ENCODE measurements at regions of chr2 and their contacts with region 1.

Region 1: GRCh38 chr2:73913414-73914054 is 13.1 kb upstream of the DGUOK start:
- DNase-seq: no peak
- H3K27ac ChIP-seq: no peak overlapping the region
- CTCF ChIP-seq: no peak

Region 2: GRCh38 chr2:73894877-73895276 is 18.7 kb before region 1 on chr2:
- CTCF ChIA-PET with region 1: interaction called, 10 read pairs
- POLR2A ChIA-PET with region 1: no interaction called
- DNase-seq: no peak
- H3K27ac ChIP-seq: no peak overlapping the region
- CTCF ChIP-seq: no peak

Region 3: DNA sequence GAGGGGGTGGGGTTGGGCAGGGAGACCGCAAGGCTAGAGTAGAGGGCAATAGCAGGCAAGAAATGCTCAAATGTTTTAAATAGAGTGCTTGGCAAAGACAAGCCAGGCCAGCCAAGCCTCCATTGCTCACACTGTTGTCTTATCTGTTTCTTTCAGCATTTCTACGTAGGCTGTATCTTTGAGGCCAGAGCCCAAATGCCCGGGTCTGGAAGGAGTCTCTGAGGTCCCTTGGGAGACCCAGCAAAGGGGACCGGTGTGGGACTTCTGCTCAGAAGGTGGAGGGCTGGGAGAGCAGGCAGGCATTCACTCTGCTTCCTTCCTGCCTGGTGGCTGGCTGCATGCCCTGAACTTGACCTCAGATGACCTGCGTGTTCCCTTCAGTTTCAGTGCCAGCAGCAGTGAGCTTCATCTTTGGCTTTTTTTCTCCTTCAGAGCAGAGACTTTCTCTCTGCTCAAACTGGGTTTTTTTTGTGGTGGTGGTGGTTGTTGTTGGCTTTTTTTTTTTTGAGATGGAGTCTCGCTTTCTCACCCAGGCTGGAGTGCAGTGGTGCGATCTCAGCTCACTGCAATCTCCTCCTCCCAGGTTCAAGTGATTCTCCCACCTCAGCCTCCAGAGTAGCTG is 57.4 kb after region 1 on chr2:
- CTCF ChIA-PET with region 1: no interaction called
- POLR2A ChIA-PET with region 1: no interaction called
- DNase-seq: no peak
- H3K27ac ChIP-seq: peak overlapping the region; percentile 62
- CTCF ChIP-seq: no peak

Region 4: GRCh38 chr2:74334931-74335333 is 421.4 kb after region 1 on chr2:
- CTCF ChIA-PET with region 1: no interaction called
- POLR2A ChIA-PET with region 1: no interaction called
- DNase-seq: peak; percentile 72
- H3K27ac ChIP-seq: no peak overlapping the region
- CTCF ChIP-seq: peak; percentile 94